ENCODE measurements at regions of chr2 and their contacts with region 1.

Region 1: DNA sequence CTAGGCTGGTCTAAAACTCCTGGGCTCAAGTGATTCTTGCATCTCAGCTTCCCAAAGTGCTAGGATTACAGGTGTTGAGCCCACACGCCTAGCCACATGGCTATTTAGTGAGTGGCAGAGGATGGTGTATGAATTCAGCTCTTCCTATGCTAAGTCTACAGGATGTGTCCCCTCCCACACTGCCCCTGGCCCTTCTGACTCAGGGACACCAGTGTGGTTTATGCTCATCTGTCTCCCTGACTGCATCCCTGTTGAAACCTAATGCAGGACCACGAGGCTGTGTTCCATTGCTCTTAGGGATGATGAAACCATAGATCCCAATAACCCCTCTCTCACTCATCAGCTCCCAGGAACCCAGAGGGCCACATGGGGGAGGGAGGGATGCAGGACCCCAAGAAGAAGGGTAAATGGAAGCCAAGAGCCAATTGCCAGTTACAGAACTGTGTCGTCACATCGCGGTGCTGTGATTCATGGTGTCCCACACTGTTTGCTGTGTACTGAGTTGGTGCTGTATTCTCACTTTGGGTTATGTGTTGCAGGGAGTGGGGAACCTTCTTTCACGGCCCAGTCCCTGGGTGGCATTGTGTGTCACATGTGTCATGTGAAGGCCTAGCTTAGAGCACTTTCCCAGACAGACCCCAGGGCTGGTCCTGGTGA is 102.9 kb upstream of the HAAO start:
- DNase-seq: peak in 1 of 2 donors; percentile 56
- H3K4me3 ChIP-seq: no peak overlapping the region
- H3K27ac ChIP-seq: peak overlapping the region; percentile 19 to 82
- H3K4me1 ChIP-seq: peaks cover 4 to 10% of the 10 kb centered on the region in 2 donors
- H3K27me3 ChIP-seq: no peaks in the 10 kb centered on the region
- CTCF ChIP-seq: no peak

Region 2: GRCh38 chr2:42859006-42859552 is 36.2 kb before region 1 on chr2:
- intact Hi-C with region 1: loop called (anchors 5 kb)
- DNase-seq: peak in 1 of 2 donors; percentile 88
- H3K4me3 ChIP-seq: no peak overlapping the region
- H3K27ac ChIP-seq: peak overlapping the region in 1 of 2 donors; percentile 34
- H3K4me1 ChIP-seq: peaks cover 5 to 6% of the 10 kb centered on the region in 2 donors
- H3K27me3 ChIP-seq: no peaks in the 10 kb centered on the region
- CTCF ChIP-seq: peak; percentile 89 to 91 (median 90)

Region 3: DNA sequence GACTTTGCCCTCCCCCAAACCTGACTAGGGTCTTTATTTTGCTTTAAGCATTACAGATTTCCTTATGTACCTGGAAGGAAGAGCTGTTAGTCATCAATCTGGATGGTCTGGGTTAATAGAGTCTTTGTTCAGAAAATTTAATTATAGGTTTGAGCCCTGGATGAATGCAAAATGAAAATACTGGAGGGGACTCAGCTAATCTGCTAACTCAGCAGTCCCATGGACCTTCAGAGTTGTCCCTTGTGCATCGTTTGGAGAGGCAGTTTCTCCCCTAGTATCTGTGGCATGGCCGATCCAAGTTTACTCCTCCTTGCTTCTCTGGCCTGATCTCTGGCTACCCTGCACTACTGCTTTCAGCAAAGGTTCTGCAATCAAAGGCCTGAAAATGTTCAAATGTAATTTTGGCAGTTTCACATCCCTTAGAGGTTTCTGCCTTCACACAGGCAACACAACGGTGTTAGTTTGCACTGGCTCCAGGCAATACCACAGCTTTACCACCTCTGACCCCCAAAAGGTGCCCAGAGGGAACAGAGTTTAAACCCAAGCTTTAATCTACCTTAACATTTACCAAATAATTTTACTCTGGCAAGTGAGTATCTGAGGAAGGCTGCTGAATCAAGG is 566.3 kb after region 1 on chr2:
- intact Hi-C with region 1: no loop called
- DNase-seq: no peak
- H3K4me3 ChIP-seq: no peak overlapping the region
- H3K27ac ChIP-seq: peak overlapping the region; percentile 67 to 68
- H3K4me1 ChIP-seq: peaks cover 7 to 75% of the 10 kb centered on the region in 2 donors
- H3K27me3 ChIP-seq: no peaks in the 10 kb centered on the region
- CTCF ChIP-seq: no peak

Measured in ascending aorta (tissue), 2 donors.